B cell (primary cell): ENCODE measurements at regions of chr12 and their contacts with region 1.

Region 1: GRCh38 chr12:7188562-7189397 is 706 bp upstream of the PEX5 start:
- DNase-seq: peak; percentile 67
- ATAC-seq: peak; percentile 15
- H3K4me3 ChIP-seq: peak overlapping the region; percentile 84 to 98 (median 94)
- H3K4me3 Mint-ChIP-seq: peak overlapping the region; percentile 93
- H3K27ac ChIP-seq: peak overlapping the region; percentile 82 to 85
- H3K27ac Mint-ChIP-seq: peak overlapping the region; percentile 92
- H3K4me1 ChIP-seq: peaks cover 18 to 23% of the 10 kb centered on the region in 2 donors
- H3K4me1 Mint-ChIP-seq: peaks cover 30% of the 10 kb centered on the region
- H3K27me3 ChIP-seq: no peaks in the 10 kb centered on the region
- H3K27me3 Mint-ChIP-seq: no peaks in the 10 kb centered on the region
- CTCF ChIP-seq: peak; percentile 68

Region 2: GRCh38 chr12:7129872-7130680 is 58.7 kb before region 1 on chr12 and contains the start of gene CLSTN3:
- CTCF ChIA-PET with region 1: no interaction called
- POLR2A ChIA-PET with region 1: no interaction called
- intact Hi-C with region 1: loop called (anchors 1 kb)
- DNase-seq: peak; percentile 91
- ATAC-seq: peak; percentile 90
- H3K4me3 ChIP-seq: peak within 1 kb of the TSS; percentile 53 to 92 (median 75)
- H3K4me3 Mint-ChIP-seq: peak within 1 kb of the TSS; percentile 98
- H3K27ac ChIP-seq: peak within 1 kb of the TSS; percentile 10 to 54
- H3K27ac Mint-ChIP-seq: peak within 1 kb of the TSS; percentile 87
- H3K4me1 ChIP-seq: peaks cover 16 to 26% of the 10 kb centered on the region in 2 donors
- H3K4me1 Mint-ChIP-seq: peaks cover 30% of the 10 kb centered on the region
- H3K27me3 ChIP-seq: no peaks in the 10 kb centered on the region
- H3K27me3 Mint-ChIP-seq: no peaks in the 10 kb centered on the region
- CTCF ChIP-seq: no peak
- total RNA-seq, gene CLSTN3: 36.5 and 41.2 TPM in 2 replicates

Region 3: GRCh38 chr12:7970475-7971252 is 781.9 kb after region 1 on chr12:
- CTCF ChIA-PET with region 1: no interaction called
- POLR2A ChIA-PET with region 1: no interaction called
- intact Hi-C with region 1: loop called (anchors 2 kb)
- DNase-seq: peak; percentile 90
- ATAC-seq: peak; percentile 90
- H3K4me3 ChIP-seq: peak overlapping the region; percentile 65 to 94 (median 74)
- H3K4me3 Mint-ChIP-seq: peak overlapping the region; percentile 88
- H3K27ac ChIP-seq: peak overlapping the region; percentile 91 to 96
- H3K27ac Mint-ChIP-seq: peak overlapping the region; percentile 93
- H3K4me1 ChIP-seq: peaks cover 26 to 35% of the 10 kb centered on the region in 2 donors
- H3K4me1 Mint-ChIP-seq: peaks cover 26% of the 10 kb centered on the region
- H3K27me3 ChIP-seq: no peaks in the 10 kb centered on the region
- H3K27me3 Mint-ChIP-seq: no peaks in the 10 kb centered on the region
- CTCF ChIP-seq: peak; percentile 24